ENCODE measurements at regions of chr5 and their contacts with region 1.

Region 1: DNA sequence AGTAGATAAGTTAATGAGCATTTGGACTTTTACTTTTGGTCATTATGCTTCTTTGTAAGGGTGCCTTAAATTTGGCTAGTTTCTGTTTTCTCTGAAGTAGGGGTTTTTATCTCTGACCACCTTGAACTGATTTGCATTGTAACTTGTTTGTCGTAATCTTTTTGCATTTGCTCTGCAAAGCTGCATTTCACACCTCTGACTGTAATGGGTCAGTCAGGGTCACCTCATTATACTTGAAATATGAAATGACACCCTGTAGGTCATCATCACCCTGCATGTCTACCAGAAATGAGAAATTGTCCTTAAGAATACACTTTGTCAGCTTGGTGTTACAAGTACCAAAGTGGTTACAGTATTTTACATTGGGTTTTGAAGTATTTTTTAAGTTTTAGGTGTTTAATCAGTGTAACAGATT is 74.0 kb downstream of the KCNN2 start:
- DNase-seq: no peak
- H3K4me3 ChIP-seq: no peak overlapping the region
- H3K27ac ChIP-seq: no peak overlapping the region
- H3K4me1 ChIP-seq: peaks cover 0 to 7% (median 0%) of the 10 kb centered on the region in 4 experiments; a peak in 1 of 7 replicates
- H3K27me3 ChIP-seq: no peaks in the 10 kb centered on the region
- CTCF ChIP-seq: no peak
- EP300 ChIP-seq: no peak
- POLR2A ChIP-seq: no peak
- RAD21 ChIP-seq: no peak

Region 2: GRCh38 chr5:114266374-114266773 is 169.5 kb before region 1 on chr5:
- CTCF ChIA-PET with region 1: no interaction called
- POLR2A ChIA-PET with region 1: no interaction called
- DNase-seq: no peak
- H3K4me3 ChIP-seq: no peak overlapping the region
- H3K27ac ChIP-seq: no peak overlapping the region
- H3K4me1 ChIP-seq: peaks cover 0 to 4% (median 1%) of the 10 kb centered on the region in 4 experiments; a peak in 2 of 7 replicates
- H3K27me3 ChIP-seq: no peaks in the 10 kb centered on the region
- CTCF ChIP-seq: no peak
- EP300 ChIP-seq: no peak
- POLR2A ChIP-seq: no peak
- RAD21 ChIP-seq: no peak

Region 3: DNA sequence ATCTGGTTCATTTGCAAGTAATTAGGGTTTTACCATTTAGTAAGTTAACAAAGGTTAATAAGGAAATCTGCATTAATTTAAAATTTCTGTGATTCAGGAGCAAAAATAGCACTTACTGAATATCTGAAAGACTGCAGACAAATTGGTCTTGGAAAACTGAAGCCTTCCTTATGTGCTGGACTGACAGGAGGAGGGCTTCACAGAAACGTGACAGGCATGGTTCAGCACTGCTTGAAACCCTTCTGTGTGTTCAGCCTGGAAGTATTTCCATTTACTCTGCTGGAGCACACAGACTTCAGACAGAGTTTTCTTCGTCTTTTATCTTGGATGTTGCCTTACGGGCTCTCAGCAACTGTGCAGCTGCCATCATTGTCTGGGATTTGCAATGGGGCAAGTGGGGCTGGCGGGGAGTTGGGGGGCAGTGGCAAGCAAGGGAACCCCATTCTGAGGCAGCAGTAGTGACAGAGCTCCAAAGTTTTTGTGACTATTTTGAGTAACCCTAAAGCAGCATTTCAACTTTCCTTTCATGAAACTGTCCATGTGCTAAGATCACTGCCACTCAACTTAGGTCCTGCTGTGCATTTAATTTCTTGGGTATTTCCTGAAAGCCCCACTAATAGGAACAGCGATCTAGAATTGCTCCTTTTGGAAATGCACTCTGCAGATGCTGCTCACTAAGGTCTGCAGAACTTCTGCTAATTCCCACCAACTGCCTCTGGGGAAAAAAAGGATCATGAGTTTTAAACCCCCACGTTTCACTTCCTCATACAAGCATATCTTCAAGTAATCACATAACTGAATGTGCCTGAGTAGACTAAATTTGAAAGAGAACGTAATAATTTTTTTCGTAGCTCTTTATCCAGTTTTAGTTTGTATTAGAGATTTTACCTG is 17.5 kb before region 1 on chr5:
- CTCF ChIA-PET with region 1: interaction called, 14 read pairs
- POLR2A ChIA-PET with region 1: no interaction called
- DNase-seq: no peak
- H3K4me3 ChIP-seq: no peak overlapping the region
- H3K27ac ChIP-seq: no peak overlapping the region
- H3K4me1 ChIP-seq: peaks cover 0 to 4% (median 1%) of the 10 kb centered on the region in 4 experiments; a peak in 3 of 7 replicates
- H3K27me3 ChIP-seq: no peaks in the 10 kb centered on the region
- CTCF ChIP-seq: no peak
- EP300 ChIP-seq: no peak
- POLR2A ChIP-seq: no peak
- RAD21 ChIP-seq: no peak